Naive thymus-derived CD4-positive, alpha-beta T cell (primary cell): ENCODE measurements at regions of chr9 and their contacts with region 1.

Region 1: GRCh38 chr9:15529566-15530324 is 19.0 kb upstream of the PSIP1 start:
- DNase-seq: no peak
- ATAC-seq: no peak
- H3K4me3 ChIP-seq: no peak overlapping the region
- H3K4me3 Mint-ChIP-seq: no peak overlapping the region
- H3K27ac ChIP-seq: no peak overlapping the region
- H3K27ac Mint-ChIP-seq: no peak overlapping the region
- H3K4me1 ChIP-seq: no peaks in the 10 kb centered on the region
- H3K4me1 Mint-ChIP-seq: peaks cover 0 to 18% (median 7%) of the 10 kb centered on the region in 7 donors
- H3K27me3 ChIP-seq: no peaks in the 10 kb centered on the region
- H3K27me3 Mint-ChIP-seq: peaks cover 0 to 7% (median 0%) of the 10 kb centered on the region in 5 donors

Region 2: GRCh38 chr9:14909961-14910805 is 619.6 kb before region 1 on chr9 and contains the start of gene FREM1:
- CTCF ChIA-PET with region 1: no interaction called
- POLR2A ChIA-PET with region 1: no interaction called
- intact Hi-C with region 1: no loop called
- DNase-seq: no peak
- ATAC-seq: no peak
- H3K4me3 ChIP-seq: no peak within 1 kb of the TSS
- H3K4me3 Mint-ChIP-seq: no peak within 1 kb of the TSS
- H3K27ac ChIP-seq: no peak within 1 kb of the TSS
- H3K27ac Mint-ChIP-seq: no peak within 1 kb of the TSS
- H3K4me1 ChIP-seq: no peaks in the 10 kb centered on the region
- H3K4me1 Mint-ChIP-seq: no peaks in the 10 kb centered on the region
- H3K27me3 ChIP-seq: peaks cover 0 to 4% of the 10 kb centered on the region in 2 donors
- H3K27me3 Mint-ChIP-seq: peaks cover 0 to 15% (median 0%) of the 10 kb centered on the region in 5 donors
- total RNA-seq, gene FREM1: 0.24 to 0.86 TPM in 2 of 5 experiments, not detected in the others

Region 3: DNA sequence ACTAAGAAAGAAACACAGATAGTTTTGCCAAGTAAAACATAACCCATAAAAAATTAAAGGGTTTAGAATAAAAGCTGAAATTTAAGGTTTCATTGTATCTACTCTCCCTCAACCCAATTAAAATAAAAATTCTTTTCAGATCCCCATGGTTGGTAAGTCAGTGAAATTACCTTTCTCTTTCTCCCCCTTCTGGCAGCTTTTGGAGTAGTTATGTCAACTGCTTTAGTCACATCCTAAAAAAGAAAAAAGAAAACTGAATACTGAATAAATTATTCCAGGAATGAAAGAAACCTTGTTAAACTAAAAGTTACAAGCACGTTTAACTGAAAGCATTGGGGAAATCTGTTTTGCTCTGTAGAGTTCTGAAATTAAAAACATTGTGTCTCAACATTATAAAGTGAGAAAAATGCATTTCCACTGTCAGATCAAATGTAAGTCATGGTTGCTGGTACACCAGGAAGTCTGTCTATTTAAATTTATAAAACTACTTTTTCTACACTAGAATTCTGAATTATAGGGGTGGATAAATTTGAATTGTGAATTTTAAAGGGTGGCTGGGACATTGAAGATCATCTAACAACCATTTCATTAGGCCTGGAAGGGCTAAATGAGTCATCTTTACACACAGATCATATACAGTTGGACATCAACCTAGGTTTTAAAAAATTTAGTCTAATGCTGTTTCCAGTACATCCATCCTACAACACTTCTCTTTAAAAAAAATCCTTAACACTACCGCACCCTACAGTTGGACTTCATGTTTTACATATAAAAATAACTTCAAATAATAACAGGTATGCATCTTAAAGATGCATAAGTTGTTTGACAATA is 43.7 kb before region 1 on chr9:
- CTCF ChIA-PET with region 1: interaction called, 5 read pairs
- POLR2A ChIA-PET with region 1: interaction called, 3 read pairs
- intact Hi-C with region 1: loop called (anchors 1 kb)
- DNase-seq: peak in 5 of 9 donors; percentile 27 to 41 (median 31)
- ATAC-seq: peak; percentile 45
- H3K4me3 ChIP-seq: no peak overlapping the region
- H3K4me3 Mint-ChIP-seq: no peak overlapping the region
- H3K27ac ChIP-seq: no peak overlapping the region
- H3K27ac Mint-ChIP-seq: peak overlapping the region in 8 of 9 donors; percentile 10 to 63 (median 42)
- H3K4me1 ChIP-seq: peaks cover 6 to 9% of the 10 kb centered on the region in 2 donors
- H3K4me1 Mint-ChIP-seq: peaks cover 19 to 57% (median 47%) of the 10 kb centered on the region in 7 donors
- H3K27me3 ChIP-seq: no peaks in the 10 kb centered on the region
- H3K27me3 Mint-ChIP-seq: no peaks in the 10 kb centered on the region

Region 4: GRCh38 chr9:15501179-15501578 is 28.6 kb before region 1 on chr9:
- CTCF ChIA-PET with region 1: interaction called, 4 read pairs
- POLR2A ChIA-PET with region 1: interaction called, 3 read pairs
- intact Hi-C with region 1: loop called in 1 of 2 experiments (anchors 1 kb)
- DNase-seq: peak in 1 of 9 donors; percentile 27
- ATAC-seq: no peak
- H3K4me3 ChIP-seq: no peak overlapping the region
- H3K4me3 Mint-ChIP-seq: peak overlapping the region in 8 of 10 donors; percentile 19 to 66 (median 52)
- H3K27ac ChIP-seq: no peak overlapping the region
- H3K27ac Mint-ChIP-seq: peak overlapping the region; percentile 11 to 92 (median 60)
- H3K4me1 ChIP-seq: peaks cover 8 to 28% of the 10 kb centered on the region in 2 donors
- H3K4me1 Mint-ChIP-seq: peaks cover 35 to 87% (median 70%) of the 10 kb centered on the region in 7 donors
- H3K27me3 ChIP-seq: no peaks in the 10 kb centered on the region
- H3K27me3 Mint-ChIP-seq: no peaks in the 10 kb centered on the region

Region 5: DNA sequence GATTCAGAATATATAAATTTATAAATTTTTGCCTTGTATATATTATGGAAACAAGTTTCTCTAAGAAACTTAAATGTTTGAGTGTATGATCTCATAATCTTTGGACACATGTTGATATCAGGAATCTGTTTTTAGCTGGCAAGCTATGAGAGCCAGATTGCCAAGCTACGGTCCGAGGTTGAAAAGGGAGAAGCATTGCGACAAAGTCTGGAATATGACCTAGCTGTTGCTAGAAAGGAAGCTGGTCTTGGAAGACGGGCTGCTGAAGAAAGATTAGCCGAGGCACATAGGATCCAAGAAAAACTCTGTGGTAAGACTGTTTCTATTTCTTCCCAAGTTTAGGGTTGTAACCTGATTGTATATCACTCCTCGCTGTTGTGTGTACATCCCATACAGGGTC is 49.0 kb after region 1 on chr9:
- CTCF ChIA-PET with region 1: no interaction called
- POLR2A ChIA-PET with region 1: no interaction called
- intact Hi-C with region 1: no loop called
- DNase-seq: no peak
- ATAC-seq: no peak
- H3K4me3 ChIP-seq: no peak overlapping the region
- H3K4me3 Mint-ChIP-seq: no peak overlapping the region
- H3K27ac ChIP-seq: no peak overlapping the region
- H3K27ac Mint-ChIP-seq: no peak overlapping the region
- H3K4me1 ChIP-seq: no peaks in the 10 kb centered on the region
- H3K4me1 Mint-ChIP-seq: no peaks in the 10 kb centered on the region
- H3K27me3 ChIP-seq: no peaks in the 10 kb centered on the region
- H3K27me3 Mint-ChIP-seq: no peaks in the 10 kb centered on the region